ENCODE measurements at regions of chr19 and their contacts with region 1.

Region 1: GRCh38 chr19:6393074-6393983 is at the start of gene GTF2F1:
- DNase-seq: peak; percentile 95 to 98
- ATAC-seq: peak; percentile 92 to 96 (median 94)
- H3K4me3 ChIP-seq: peak within 1 kb of the TSS; percentile 78
- H3K27ac ChIP-seq: peak within 1 kb of the TSS; percentile 86
- H3K4me1 ChIP-seq: peaks cover 8% of the 10 kb centered on the region
- H3K27me3 ChIP-seq: no peaks in the 10 kb centered on the region
- CTCF ChIP-seq: no peak
- total RNA-seq, gene GTF2F1: 23.7 to 37.0 (median 33.3) TPM

Region 2: GRCh38 chr19:6372594-6373095 is 20.7 kb before region 1 on chr19 and contains the start of gene ALKBH7:
- intact Hi-C with region 1: loop called in 1 of 2 experiments (anchors 1 kb)
- DNase-seq: peak; percentile 96 to 98
- ATAC-seq: peak; percentile 87 to 92 (median 89)
- H3K4me3 ChIP-seq: peak within 1 kb of the TSS; percentile 90
- H3K27ac ChIP-seq: peak within 1 kb of the TSS; percentile 98
- H3K4me1 ChIP-seq: no peaks in the 10 kb centered on the region
- H3K27me3 ChIP-seq: no peaks in the 10 kb centered on the region
- CTCF ChIP-seq: no peak
- total RNA-seq, gene ALKBH7: 72.3 to 120 (median 96.8) TPM

Measured in psoas muscle (tissue), 8 donors.